GM23248 (cell line): ENCODE measurements at regions of chr10 and their contacts with region 1.

Region 1: DNA sequence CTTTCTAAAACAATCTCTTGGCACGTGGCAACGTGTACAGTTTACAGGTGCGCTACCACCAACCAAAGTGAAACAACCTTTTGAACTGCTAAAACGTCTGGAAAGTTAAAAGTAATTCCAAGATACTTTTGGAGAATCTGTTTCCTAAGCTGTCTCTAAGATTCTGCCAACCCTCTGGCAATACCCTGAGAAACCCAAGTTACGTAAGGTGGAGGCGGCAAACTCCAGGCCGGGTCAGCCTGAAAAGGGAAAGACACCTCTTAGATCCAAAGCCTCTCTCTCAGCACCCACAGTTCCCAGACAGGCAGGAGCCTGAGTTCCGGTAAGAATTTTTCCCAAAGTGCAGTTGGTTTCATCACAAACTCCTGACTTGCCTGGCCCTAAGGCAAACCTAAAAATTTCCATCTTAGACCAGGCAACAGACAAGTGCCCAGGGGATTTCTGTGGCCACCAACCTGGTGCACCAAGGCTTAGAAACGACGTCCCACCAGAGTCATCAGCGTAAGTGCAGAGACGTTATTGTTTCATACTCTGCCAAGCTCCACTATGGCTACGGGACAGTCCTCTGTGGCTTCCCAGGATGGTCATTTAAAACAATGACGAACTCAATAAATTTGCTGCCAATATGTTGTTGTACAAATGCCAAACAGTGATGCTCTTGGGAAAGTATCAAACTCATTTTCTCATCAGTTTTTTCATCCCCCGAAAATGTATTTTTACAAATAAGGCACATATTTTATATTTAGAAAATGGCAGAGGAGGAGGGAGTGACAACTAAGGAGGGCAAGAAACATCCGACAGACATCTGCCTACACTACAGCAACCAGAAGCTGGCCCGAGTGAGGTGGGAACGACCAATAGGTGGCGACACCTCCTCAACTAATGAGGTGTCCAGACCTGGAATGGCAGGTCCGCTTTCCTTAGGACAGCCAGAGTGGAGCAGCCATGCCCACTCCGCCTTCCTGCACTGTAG is 205.8 kb upstream of the FRMD4A start:
- DNase-seq: peak; percentile 81
- H3K4me3 ChIP-seq: no peak overlapping the region
- H3K27ac ChIP-seq: no peak overlapping the region
- H3K4me1 ChIP-seq: no peaks in the 10 kb centered on the region
- H3K27me3 ChIP-seq: no peaks in the 10 kb centered on the region

Region 2: GRCh38 chr10:14466257-14466656 is 70.3 kb before region 1 on chr10:
- in situ Hi-C with region 1: no loop called
- DNase-seq: peak; percentile 19
- H3K4me3 ChIP-seq: no peak overlapping the region
- H3K27ac ChIP-seq: no peak overlapping the region
- H3K4me1 ChIP-seq: no peaks in the 10 kb centered on the region
- H3K27me3 ChIP-seq: peaks cover 60% of the 10 kb centered on the region

Region 3: DNA sequence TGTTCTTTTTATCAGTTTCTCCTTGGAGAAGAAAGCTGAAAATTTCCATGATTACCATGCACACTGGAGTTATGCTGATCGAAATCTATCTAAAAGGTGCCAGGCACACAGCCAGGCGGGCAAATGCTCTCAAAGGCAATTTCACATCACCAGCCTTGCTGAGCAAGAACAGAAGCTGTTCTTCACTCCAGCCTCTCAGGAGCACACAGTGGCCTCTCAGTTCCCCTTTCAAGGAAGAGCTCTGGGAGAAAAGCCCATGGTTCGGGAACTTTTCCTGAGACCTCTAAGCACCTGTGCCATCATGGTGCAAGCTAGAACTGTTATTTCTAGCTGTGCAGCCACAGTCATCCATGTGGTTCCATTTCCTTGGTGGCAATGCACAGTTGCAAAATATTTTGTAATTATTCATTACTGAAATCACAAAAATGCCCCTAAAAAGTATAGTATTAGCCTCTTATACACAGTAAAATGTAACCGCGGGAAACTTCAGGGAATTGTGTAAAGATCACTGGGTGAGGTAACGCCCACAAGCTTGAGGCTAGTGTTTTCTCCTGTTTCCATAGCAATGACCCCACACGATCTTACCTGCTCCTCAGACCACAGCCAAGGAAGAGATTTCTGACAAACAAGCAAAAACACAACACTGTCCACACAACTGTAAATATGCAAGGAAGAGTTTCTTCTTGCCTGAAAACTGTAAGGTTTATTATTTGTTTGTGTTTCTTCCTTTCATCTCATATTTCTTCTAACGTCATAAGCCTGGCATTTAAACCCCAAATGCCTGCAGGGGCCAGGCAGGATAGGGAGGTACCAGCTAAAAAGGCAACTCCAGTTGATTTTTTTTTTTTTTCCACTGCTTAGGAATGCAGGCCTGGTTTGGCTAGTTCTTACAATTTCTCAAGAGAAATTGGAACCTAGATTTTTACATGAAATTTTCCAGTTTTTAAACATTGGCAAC is 117.0 kb after region 1 on chr10:
- in situ Hi-C with region 1: no loop called
- DNase-seq: peak; percentile 89
- H3K4me3 ChIP-seq: peak overlapping the region; percentile 40
- H3K27ac ChIP-seq: peak overlapping the region; percentile 72
- H3K4me1 ChIP-seq: peaks cover 25% of the 10 kb centered on the region
- H3K27me3 ChIP-seq: no peaks in the 10 kb centered on the region

Region 4: GRCh38 chr10:14822879-14823755 is 286.6 kb after region 1 on chr10:
- in situ Hi-C with region 1: loop called (anchors 10 kb)
- DNase-seq: peak; percentile 70
- H3K4me3 ChIP-seq: no peak overlapping the region
- H3K27ac ChIP-seq: no peak overlapping the region
- H3K4me1 ChIP-seq: peaks cover 12% of the 10 kb centered on the region
- H3K27me3 ChIP-seq: no peaks in the 10 kb centered on the region